ENCODE measurements at regions of chr13 and their contacts with region 1.

Region 1: GRCh38 chr13:30865123-30866049 is 40.7 kb upstream of the MEDAG start:
- DNase-seq: peak; percentile 96
- ATAC-seq: peak; percentile 55
- H3K4me3 ChIP-seq: peak overlapping the region; percentile 30; the same call in 1 of the 2 replicates
- H3K27ac ChIP-seq: peak overlapping the region; percentile 92
- H3K4me1 ChIP-seq: peaks cover 46% of the 10 kb centered on the region
- H3K27me3 ChIP-seq: no peaks in the 10 kb centered on the region
- CTCF ChIP-seq: peak; percentile 90
- POLR2A ChIP-seq: peak; percentile 77; the same call in 1 of the 2 replicates
- RAD21 ChIP-seq: peak; percentile 92

Region 2: DNA sequence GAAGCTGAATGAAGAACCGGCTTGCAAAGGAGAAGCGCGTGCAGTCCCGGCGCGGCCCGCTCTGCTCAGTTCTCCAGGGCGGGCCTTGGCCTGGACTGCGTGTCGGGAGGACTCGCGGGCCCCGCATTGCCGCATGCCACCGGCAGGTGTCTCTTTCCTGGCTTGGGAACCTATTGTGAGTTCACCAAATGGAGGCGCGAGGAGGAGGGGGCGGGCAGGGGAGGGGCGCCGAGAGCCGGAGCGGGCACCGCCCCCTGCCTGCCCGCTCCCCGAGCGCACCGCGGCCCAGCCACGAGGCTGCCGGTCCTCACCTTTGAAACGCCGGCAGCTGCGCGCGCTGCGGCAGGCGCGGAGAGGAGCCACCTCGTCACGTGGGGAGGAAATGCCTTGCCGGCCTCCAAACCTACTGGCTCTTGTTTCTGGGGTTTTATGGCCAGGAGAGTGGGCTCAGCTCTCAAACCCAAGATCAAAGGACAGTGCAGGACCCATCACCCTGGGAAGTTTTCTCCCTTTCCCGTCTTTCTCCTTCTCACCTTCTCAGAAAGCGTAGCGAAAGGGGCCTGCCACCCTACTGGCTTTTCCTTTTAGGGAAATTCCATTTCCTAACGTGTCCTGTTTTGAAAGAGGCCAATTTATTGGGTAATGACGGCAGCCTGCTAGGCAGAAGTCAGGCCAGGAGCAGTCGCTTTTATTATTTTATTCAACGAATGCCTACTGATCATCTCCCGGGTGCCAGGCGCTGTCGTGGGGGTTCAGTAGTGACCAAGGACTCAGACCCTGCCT is 456.9 kb before region 1 on chr13:
- CTCF ChIA-PET with region 1: no interaction called
- POLR2A ChIA-PET with region 1: no interaction called
- dilution Hi-C with region 1: no loop called
- in situ Hi-C with region 1: no loop called
- intact Hi-C with region 1: loop called (anchors 10 kb)
- DNase-seq: peak; percentile 79
- ATAC-seq: peak; percentile 89
- H3K4me3 ChIP-seq: peak overlapping the region; percentile 27
- H3K27ac ChIP-seq: no peak overlapping the region
- H3K4me1 ChIP-seq: peaks cover 2% of the 10 kb centered on the region; the same call in 1 of the 2 replicates
- H3K27me3 ChIP-seq: no peaks in the 10 kb centered on the region; the same call in none of the 2 replicates
- CTCF ChIP-seq: peak; percentile 57
- POLR2A ChIP-seq: no peak
- RAD21 ChIP-seq: peak; percentile 56

Region 3: DNA sequence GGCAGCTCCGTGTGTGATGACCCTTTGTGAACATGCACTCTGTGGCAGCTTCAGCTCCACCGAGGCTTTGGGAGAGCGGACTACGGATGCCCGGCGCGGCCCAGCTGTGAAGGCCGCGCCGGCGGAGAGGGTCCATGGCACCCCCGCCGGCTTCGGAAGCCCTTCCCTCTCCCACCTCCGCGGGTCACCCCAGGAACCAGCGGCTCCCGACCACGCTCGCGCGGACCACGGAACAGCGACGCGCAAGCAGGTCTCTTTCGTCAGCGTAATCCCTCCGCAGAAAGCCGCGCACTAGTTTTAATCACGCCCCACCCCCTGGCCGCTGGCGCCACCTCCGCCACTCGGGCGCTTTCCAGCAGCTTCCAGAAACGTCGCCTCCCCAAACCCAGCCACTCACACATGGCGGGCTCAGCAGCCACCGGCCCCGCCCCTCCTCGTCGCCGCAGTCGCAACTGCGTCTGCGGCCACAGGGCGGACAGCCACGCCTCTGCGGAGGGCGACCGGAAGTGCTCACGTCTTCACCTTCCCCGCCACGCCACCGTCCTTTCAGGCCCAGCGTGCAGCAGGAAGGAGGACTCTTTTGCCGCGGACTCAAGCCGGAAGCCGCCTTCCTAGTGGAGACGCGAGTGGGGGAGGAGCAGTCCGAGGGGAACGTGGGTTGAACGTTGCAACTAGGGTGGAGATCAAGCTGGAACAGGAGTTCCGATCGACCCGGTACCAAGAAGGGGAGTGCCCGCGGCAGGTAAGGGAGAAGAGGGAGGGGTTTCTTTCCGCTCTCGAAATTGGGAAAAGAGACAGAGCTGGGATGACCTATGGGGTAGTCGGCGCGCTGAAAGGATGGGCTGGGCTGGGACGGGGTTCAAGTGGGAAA is 247.8 kb before region 1 on chr13 and contains the start of gene USPL1:
- CTCF ChIA-PET with region 1: interaction called, 3 read pairs
- POLR2A ChIA-PET with region 1: no interaction called
- dilution Hi-C with region 1: no loop called
- in situ Hi-C with region 1: no loop called
- intact Hi-C with region 1: loop called (anchors 1 kb)
- DNase-seq: peak; percentile 99
- ATAC-seq: peak; percentile 94
- H3K4me3 ChIP-seq: peak within 1 kb of the TSS; percentile 72
- H3K27ac ChIP-seq: peak within 1 kb of the TSS; percentile 92
- H3K4me1 ChIP-seq: no peaks in the 10 kb centered on the region; the same call in 1 of the 2 replicates
- H3K27me3 ChIP-seq: no peaks in the 10 kb centered on the region
- CTCF ChIP-seq: peak; percentile 22; the same call in 1 of the 2 replicates
- POLR2A ChIP-seq: peak; percentile 92
- RAD21 ChIP-seq: peak; percentile 31; the same call in 1 of the 2 replicates
- total RNA-seq, gene USPL1: 15.4 and 22.5 TPM in 2 replicates

Region 4: DNA sequence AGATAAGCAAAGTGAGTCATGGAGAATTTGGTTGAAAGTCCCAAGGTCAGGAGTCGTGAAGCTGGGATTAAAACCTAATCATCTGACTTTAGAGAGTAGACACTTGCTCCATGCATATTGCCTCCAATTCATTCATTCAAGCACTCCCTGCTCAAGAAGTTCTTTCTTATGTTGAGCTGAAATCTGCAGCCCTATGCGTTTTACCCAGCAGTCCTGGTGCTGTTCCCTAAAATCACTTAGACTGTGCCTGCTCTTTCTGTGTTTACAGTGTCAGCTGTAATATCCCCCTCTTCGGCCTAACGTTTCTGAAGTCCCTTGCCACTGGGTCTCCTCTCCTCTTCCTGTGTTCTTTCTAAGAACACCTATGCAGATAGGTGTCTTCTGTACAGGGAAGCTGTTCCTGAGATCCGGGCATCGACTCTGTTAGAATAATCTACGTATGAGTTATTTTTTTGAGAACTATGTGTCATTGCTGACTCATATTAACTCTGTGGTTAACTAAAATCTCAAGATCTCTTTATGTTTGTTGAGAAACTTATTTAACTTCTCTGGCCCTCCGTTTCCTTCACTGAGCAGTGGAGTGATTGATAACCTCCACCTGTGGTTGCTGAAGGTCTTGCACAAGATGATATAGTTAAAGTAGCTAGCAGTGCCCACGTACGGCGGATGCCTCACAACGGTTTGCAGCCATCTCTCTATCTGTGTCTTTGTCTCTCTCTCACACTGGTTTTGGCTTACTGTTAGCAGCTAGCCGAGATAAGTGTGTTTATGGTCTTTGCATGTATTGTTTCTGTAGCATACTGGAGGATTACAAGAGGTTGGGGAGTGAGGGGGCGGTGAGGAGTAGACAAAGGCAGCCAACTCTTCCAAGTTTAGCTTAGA is 125.4 kb before region 1 on chr13:
- CTCF ChIA-PET with region 1: interaction called, 4 read pairs
- POLR2A ChIA-PET with region 1: no interaction called
- dilution Hi-C with region 1: no loop called
- in situ Hi-C with region 1: no loop called
- intact Hi-C with region 1: loop called (anchors 2 kb)
- DNase-seq: peak; percentile 95
- ATAC-seq: peak; percentile 47
- H3K4me3 ChIP-seq: peak overlapping the region; percentile 1; the same call in 1 of the 2 replicates
- H3K27ac ChIP-seq: peak overlapping the region; percentile 63
- H3K4me1 ChIP-seq: peaks cover 27% of the 10 kb centered on the region
- H3K27me3 ChIP-seq: peaks cover 9% of the 10 kb centered on the region
- CTCF ChIP-seq: no peak
- POLR2A ChIP-seq: no peak
- RAD21 ChIP-seq: no peak

Region 5: GRCh38 chr13:30898678-30899241 is 33.4 kb after region 1 on chr13:
- CTCF ChIA-PET with region 1: interaction called, 5 read pairs
- POLR2A ChIA-PET with region 1: no interaction called
- dilution Hi-C with region 1: no loop called
- in situ Hi-C with region 1: no loop called
- intact Hi-C with region 1: loop called (anchors 2 kb)
- DNase-seq: peak; percentile 98
- ATAC-seq: peak; percentile 84
- H3K4me3 ChIP-seq: no peak overlapping the region
- H3K27ac ChIP-seq: peak overlapping the region; percentile 88
- H3K4me1 ChIP-seq: peaks cover 27% of the 10 kb centered on the region
- H3K27me3 ChIP-seq: no peaks in the 10 kb centered on the region
- CTCF ChIP-seq: peak; percentile 28; the same call in 1 of the 2 replicates
- POLR2A ChIP-seq: peak; percentile 40; the same call in 1 of the 2 replicates
- RAD21 ChIP-seq: peak; percentile 32

Region 6: GRCh38 chr13:30978981-30979956 is 113.9 kb after region 1 on chr13:
- CTCF ChIA-PET with region 1: interaction called, 5 read pairs
- POLR2A ChIA-PET with region 1: no interaction called
- dilution Hi-C with region 1: no loop called
- in situ Hi-C with region 1: no loop called
- intact Hi-C with region 1: loop called (anchors 1 kb)
- DNase-seq: no peak
- ATAC-seq: no peak
- H3K4me3 ChIP-seq: no peak overlapping the region
- H3K27ac ChIP-seq: peak overlapping the region; percentile 75
- H3K4me1 ChIP-seq: peaks cover 13% of the 10 kb centered on the region
- H3K27me3 ChIP-seq: no peaks in the 10 kb centered on the region
- CTCF ChIP-seq: peak; percentile 21; the same call in 1 of the 2 replicates
- POLR2A ChIP-seq: no peak
- RAD21 ChIP-seq: no peak

Region 7: GRCh38 chr13:31044377-31045285 is 179.2 kb after region 1 on chr13:
- CTCF ChIA-PET with region 1: interaction called, 5 read pairs
- POLR2A ChIA-PET with region 1: interaction called, 6 read pairs
- dilution Hi-C with region 1: no loop called
- in situ Hi-C with region 1: no loop called
- intact Hi-C with region 1: loop called (anchors 1 kb)
- DNase-seq: peak; percentile 81
- ATAC-seq: peak; percentile 72
- H3K4me3 ChIP-seq: no peak overlapping the region
- H3K27ac ChIP-seq: peak overlapping the region; percentile 80
- H3K4me1 ChIP-seq: peaks cover 20% of the 10 kb centered on the region
- H3K27me3 ChIP-seq: no peaks in the 10 kb centered on the region
- CTCF ChIP-seq: peak; percentile 97
- POLR2A ChIP-seq: peak; percentile 12; the same call in 1 of the 2 replicates
- RAD21 ChIP-seq: peak; percentile 99